ENCODE measurements at regions of chr12 and their contacts with region 1.

Region 1: DNA sequence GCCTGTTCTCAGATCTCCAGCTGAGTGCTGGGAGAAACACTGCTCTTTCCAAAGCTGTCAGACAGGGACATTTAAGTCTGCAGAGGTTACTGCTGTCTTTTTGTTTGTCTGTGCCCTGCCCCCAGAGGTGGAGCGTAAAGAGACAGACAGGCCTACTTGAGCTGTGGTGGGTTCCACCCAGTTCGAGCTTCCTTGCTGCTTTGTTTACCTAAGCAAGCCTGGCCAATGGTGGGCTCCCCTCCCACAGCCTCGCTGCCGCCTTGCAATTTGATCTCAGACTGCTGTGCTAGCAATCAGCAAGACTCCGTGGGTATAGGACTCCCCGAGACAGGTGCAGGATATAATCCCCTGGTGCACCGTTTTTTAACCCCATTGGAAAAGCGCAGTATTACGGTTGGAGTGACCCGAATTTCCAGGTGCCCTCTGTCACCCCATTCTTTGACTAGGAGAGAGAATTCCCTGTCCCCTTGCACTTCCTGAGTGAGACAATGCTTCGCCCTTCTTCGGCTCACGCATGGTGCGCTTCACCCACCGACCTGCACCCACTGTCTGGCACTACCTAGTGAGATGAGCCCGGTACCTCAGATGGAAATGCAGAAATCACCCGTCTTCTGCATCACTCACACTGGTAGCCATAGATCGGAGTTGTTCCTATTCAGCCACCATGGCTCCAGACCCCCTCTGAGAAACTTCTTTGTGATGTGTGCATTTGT is 650.3 kb upstream of the ALG10B start:
- DNase-seq: no peak
- ATAC-seq: no peak
- H3K4me3 ChIP-seq: no peak overlapping the region
- H3K4me3 Mint-ChIP-seq: no peak overlapping the region
- H3K27ac ChIP-seq: no peak overlapping the region
- H3K27ac Mint-ChIP-seq: no peak overlapping the region
- H3K4me1 ChIP-seq: no peaks in the 10 kb centered on the region
- H3K4me1 Mint-ChIP-seq: no peaks in the 10 kb centered on the region
- H3K27me3 ChIP-seq: no peaks in the 10 kb centered on the region
- H3K27me3 Mint-ChIP-seq: no peaks in the 10 kb centered on the region
- CTCF ChIP-seq: no peak

Region 2: GRCh38 chr12:37543141-37543965 is 122.9 kb before region 1 on chr12:
- CTCF ChIA-PET with region 1: no interaction called
- POLR2A ChIA-PET with region 1: no interaction called
- intact Hi-C with region 1: no loop called
- DNase-seq: no peak
- ATAC-seq: no peak
- H3K4me3 ChIP-seq: no peak overlapping the region
- H3K4me3 Mint-ChIP-seq: no peak overlapping the region
- H3K27ac ChIP-seq: no peak overlapping the region
- H3K27ac Mint-ChIP-seq: no peak overlapping the region
- H3K4me1 ChIP-seq: no peaks in the 10 kb centered on the region
- H3K4me1 Mint-ChIP-seq: no peaks in the 10 kb centered on the region
- H3K27me3 ChIP-seq: no peaks in the 10 kb centered on the region
- H3K27me3 Mint-ChIP-seq: no peaks in the 10 kb centered on the region
- CTCF ChIP-seq: no peak

Region 3: GRCh38 chr12:37720846-37721245 is 54.6 kb after region 1 on chr12:
- CTCF ChIA-PET with region 1: no interaction called
- POLR2A ChIA-PET with region 1: no interaction called
- intact Hi-C with region 1: loop called in 1 of 2 experiments (anchors 5 kb)
- DNase-seq: no peak
- ATAC-seq: no peak
- H3K4me3 ChIP-seq: no peak overlapping the region
- H3K4me3 Mint-ChIP-seq: no peak overlapping the region
- H3K27ac ChIP-seq: no peak overlapping the region
- H3K27ac Mint-ChIP-seq: no peak overlapping the region
- H3K4me1 ChIP-seq: no peaks in the 10 kb centered on the region
- H3K4me1 Mint-ChIP-seq: no peaks in the 10 kb centered on the region
- H3K27me3 ChIP-seq: no peaks in the 10 kb centered on the region
- H3K27me3 Mint-ChIP-seq: no peaks in the 10 kb centered on the region
- CTCF ChIP-seq: no peak

Region 4: DNA sequence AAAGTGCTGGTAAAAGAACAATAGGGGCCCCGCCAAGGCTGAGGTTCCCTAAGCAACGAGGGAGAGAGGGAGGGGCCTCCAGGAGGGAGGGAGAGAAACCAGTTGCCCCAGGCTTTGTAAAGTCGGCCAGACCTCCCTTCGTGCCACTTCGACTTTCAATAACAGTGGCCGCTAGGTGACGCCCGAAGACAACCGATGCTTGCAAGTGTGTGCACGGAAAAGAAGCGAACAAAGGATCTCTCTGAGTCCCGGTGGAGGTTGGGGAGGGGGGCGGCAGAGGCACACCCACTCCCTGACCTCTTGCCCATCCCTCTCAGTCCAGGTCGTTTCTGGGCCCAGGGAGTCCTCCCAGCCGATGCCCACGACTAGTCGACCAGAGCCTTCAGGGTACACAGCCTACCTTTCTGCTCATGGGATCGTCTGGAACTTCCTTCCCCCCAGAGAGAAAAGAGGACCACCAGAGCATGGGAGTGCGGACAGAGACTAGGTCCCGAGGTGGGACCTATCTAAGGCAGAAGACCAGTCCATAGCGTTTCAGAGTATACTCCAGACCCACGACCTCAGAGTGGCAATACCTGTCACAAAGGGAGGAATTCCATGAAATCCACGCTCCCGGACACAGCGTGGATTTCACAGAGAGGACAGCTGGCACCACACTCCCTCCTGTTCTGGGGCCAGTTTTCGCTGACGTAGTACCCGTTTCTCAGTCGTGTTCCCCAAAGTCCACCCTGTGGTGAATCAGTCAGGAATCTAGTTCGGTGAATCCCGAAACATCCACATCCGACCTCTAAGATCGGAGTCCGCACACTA is 387.6 kb after region 1 on chr12:
- CTCF ChIA-PET with region 1: no interaction called
- POLR2A ChIA-PET with region 1: no interaction called
- intact Hi-C with region 1: no loop called
- DNase-seq: no peak
- ATAC-seq: no peak
- H3K4me3 ChIP-seq: no peak overlapping the region
- H3K4me3 Mint-ChIP-seq: no peak overlapping the region
- H3K27ac ChIP-seq: no peak overlapping the region
- H3K27ac Mint-ChIP-seq: no peak overlapping the region
- H3K4me1 ChIP-seq: no peaks in the 10 kb centered on the region
- H3K4me1 Mint-ChIP-seq: no peaks in the 10 kb centered on the region
- H3K27me3 ChIP-seq: no peaks in the 10 kb centered on the region
- H3K27me3 Mint-ChIP-seq: no peaks in the 10 kb centered on the region
- CTCF ChIP-seq: no peak